Right ventricle myocardium superior (tissue), 1 donor: ENCODE measurements at regions of chr10 and their contacts with region 1.

Region 1: DNA sequence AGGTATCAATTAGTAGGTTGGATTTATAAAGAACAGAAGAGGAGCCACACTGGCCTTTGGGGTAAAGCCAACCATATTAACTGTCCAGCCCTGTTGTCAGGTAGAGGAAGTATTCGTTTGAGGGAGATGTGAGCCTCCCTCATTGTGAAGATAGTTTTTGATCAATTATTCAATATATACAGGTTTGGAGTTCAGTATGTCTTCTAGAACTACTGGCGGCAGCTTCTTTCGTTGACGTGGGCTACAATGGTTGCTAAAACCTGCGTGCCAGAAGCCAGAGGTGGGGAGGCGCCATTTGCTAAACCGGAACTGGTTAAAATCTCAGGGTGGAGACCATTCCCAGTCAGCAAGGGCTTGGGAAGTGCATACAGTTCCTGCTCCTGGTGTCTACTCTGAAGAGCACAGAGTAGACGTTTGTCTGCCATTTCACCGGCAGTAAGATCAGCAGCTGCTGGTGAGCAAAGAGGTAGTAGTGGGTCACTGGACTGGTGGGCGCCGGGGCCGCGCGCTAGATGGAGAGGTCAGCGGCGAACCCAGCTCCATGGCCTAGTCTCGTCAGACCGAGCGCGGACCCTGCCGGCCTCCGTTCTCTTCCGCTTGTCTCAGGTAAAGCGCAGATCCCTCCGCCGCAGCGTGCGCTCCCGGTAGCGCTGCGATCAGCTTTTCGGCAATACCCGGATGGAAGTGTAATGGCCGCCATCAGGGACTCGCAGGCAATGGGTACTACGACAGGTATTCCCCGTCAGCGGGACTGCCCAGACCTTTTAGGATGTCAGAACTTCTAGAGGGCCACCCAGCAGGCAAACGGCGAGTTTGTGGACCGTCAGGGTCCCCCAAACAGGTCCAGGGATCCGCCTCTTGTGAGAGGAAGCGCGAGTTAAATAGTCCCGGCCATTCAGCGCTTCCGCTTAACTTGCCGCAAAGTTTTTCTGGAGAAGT is at the start of gene ZNF518A:
- DNase-seq: peak; percentile 95
- ATAC-seq: peak; percentile 99
- total RNA-seq, gene ZNF518A: 10.0 TPM

Region 2: DNA sequence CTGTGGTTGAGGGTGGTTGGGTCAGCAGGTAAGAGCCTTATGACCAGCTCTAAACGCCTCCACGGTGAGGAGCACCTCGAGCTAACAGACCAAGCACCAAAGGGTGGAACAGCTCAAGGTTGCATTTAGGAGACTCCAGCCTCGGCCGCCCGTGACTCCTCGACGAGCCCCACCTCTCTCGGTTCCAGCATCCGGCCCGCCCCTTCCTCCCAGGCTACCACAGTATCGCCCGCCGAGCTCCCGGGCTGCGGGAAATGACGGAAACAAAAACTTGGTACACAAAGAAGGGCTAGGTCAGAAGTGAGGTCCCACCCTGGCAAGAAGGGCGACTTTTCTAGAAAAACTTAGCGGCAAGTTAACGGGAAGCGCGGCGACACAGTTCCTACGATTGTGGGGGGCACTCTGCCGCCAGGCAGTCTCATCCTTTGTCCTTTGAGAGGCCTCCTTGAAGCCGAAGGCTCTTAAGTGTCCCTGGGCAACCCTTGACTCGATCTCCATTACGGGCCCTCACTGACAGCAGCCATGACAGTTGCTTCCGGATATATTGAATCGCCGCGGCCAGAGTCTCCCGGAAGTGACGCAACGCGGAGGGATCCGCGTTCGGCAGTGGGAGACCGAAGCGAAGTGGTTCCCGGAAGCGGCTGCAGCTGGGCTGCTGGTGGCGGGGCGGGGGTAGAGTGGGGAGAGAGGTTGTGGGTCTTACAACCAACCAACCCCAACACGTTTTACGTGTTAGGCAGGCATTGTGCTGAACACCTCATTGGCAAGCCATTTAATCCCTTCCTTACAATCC is 39.8 kb before region 1 on chr10:
- intact Hi-C with region 1: loop called (anchors 2 kb)
- DNase-seq: peak; percentile 97
- ATAC-seq: peak; percentile 100